Mammary epithelial cell (primary cell): ENCODE measurements at regions of chr3 and their contacts with region 1.

Region 1: DNA sequence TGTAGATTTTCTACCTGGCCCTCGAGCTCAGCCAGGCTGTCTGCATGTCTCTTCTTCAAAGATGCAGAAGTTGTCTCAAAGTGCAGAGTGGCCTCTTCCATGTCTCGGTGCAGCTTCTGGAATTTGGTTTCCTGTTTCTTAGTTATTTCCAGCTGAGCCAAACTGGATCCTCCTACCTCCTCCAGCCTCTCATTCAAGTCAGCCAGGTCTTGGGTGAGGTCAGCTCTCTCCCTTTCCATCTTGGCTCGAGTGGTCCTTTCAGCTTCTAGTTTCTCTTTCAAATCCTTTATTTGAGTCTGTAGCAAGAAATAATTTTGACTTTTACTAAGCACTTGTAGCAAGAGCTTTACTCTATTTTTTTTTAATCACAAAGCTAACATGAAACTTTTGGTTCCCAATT is 81.8 kb downstream of the MYH15 start:
- DNase-seq: no peak
- H3K4me3 ChIP-seq: no peak overlapping the region
- H3K27ac ChIP-seq: no peak overlapping the region
- H3K4me1 ChIP-seq: no peaks in the 10 kb centered on the region
- H3K27me3 ChIP-seq: no peaks in the 10 kb centered on the region
- CTCF ChIP-seq: no peak

Region 2: DNA sequence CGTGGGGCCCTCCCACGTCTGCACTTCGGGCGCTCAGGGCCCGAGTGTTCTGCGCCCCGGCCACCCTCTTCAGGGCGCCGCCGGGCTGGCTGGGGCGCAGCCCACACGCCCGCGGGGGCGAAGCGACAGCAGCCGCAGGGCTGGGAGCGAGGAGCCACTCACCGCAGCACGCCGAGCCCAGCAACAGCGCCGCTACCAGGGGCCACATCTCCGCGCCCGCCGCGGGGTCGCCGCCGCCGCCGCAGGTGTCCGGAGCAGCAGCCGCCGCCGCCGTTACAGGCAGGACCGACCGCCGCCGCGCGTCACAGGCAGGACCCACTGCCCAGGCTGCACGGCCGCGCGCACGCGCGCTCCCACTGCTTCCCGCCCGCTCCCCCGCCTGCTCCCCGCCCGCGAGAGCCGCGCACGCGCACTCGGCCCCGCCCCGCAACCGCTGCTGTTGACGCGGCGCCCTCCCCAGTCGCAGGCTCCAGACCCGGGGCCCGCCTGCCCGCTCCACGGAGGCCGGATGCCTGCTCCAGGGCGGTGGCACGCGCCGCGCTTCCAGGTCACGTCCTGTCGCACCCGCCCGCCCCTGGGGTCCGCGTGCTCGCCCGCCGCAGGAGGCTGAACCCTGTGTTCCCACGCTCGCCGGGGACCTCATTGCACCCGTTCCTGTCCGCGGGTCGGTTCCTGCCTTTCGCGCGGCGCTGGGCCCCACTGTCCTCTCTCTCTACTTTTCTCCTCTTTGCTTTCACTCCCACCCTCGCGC is 337.7 kb before region 1 on chr3 and contains the start of gene CD47:
- CTCF ChIA-PET with region 1: no interaction called
- dilution Hi-C with region 1: no loop called
- in situ Hi-C with region 1: no loop called
- intact Hi-C with region 1: no loop called
- DNase-seq: peak; percentile 86
- H3K4me3 ChIP-seq: peak within 1 kb of the TSS; percentile 83 to 99 (median 84)
- H3K27ac ChIP-seq: peak within 1 kb of the TSS; percentile 66
- H3K4me1 ChIP-seq: peaks cover 9% of the 10 kb centered on the region
- H3K27me3 ChIP-seq: no peaks in the 10 kb centered on the region
- CTCF ChIP-seq: no peak
- total RNA-seq, gene CD47: 65.0 to 68.5 TPM

Region 3: GRCh38 chr3:108461661-108462111 is 33.1 kb after region 1 on chr3:
- CTCF ChIA-PET with region 1: no interaction called
- dilution Hi-C with region 1: loop called (anchors 5 kb)
- in situ Hi-C with region 1: no loop called
- intact Hi-C with region 1: no loop called
- DNase-seq: no peak
- H3K4me3 ChIP-seq: no peak overlapping the region
- H3K27ac ChIP-seq: no peak overlapping the region
- H3K4me1 ChIP-seq: no peaks in the 10 kb centered on the region
- H3K27me3 ChIP-seq: no peaks in the 10 kb centered on the region
- CTCF ChIP-seq: no peak